Endothelial cell of umbilical vein (primary cell): ENCODE measurements at regions of chr15 and their contacts with region 1.

Region 1: DNA sequence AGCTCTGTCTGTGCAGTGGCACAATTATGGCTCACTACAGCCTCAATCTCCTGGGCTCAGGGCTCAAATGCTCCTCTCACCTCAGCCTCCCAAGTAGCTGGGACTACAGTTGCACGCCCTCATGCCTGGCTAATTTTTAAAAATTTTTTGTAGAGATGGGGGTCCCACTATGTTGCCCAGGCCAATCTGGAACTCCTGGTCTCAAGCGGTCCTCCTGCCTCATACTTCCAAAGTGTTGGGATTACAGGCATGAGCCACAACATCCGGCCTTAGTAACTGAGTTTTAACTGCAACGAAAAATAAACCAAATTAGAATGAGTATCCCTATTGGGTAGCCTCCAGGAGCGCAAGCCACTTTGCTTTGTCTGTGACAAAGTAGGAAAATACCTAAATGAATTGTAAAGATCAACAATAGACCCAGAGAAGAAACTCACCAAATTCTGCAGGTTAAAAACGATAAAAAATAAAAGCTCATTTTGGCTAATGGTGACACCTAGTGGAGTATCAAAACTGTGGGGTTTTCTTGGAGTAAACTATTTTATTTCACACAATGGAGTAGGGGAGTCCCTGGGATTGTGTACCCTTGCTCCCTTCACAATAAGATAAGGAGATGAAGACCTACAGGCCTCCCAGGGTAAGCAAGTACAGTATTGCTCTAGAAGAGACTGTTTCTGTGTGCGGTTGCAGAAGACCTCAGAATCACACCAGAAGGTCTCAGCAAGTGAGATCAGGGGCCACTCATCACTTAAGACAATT is 21.0 kb upstream of the CA12 start:
- DNase-seq: peak; percentile 67
- H3K4me3 ChIP-seq: no peak overlapping the region
- H3K27ac ChIP-seq: no peak overlapping the region
- H3K4me1 ChIP-seq: peaks cover 17% of the 10 kb centered on the region
- H3K27me3 ChIP-seq: no peaks in the 10 kb centered on the region
- CTCF ChIP-seq: peak; percentile 43 to 48
- POLR2A ChIP-seq: no peak

Region 2: DNA sequence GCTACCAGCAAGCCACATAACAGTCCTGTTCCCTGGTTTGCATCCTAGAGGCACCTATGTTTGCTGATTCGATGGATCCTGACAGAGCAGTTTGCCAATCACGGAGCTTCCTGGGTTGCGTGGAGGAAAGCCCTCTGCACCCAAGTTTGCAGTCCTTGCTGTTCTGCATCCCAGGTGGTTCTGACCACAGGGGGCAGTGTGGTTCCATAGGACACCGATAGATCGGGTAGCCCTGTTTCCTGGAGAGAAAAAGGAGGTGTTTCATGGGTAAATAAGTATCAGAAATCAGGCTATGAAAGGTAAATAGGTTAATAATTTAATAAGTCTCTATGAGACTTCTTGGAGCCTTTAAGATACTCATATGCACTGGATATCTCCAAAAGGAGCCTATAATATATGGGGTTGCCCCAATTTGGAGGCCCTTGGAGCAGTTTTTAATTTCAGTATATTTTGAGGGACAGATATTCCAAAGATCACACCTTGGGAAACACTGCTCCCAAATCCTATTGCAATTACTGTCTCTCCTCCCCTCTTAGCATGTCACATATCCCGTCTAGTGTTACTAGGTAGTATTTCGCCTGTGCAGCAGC is 554.7 kb before region 1 on chr15:
- CTCF ChIA-PET with region 1: interaction called, 6 read pairs
- POLR2A ChIA-PET with region 1: no interaction called
- dilution Hi-C with region 1: no loop called
- intact Hi-C with region 1: loop called (anchors 5 kb)
- DNase-seq: peak; percentile 65
- H3K4me3 ChIP-seq: no peak overlapping the region
- H3K27ac ChIP-seq: peak overlapping the region; percentile 44
- H3K4me1 ChIP-seq: peaks cover 39% of the 10 kb centered on the region
- H3K27me3 ChIP-seq: no peaks in the 10 kb centered on the region
- CTCF ChIP-seq: peak; percentile 57 to 73
- POLR2A ChIP-seq: no peak

Region 3: GRCh38 chr15:63122002-63122893 is 280.4 kb before region 1 on chr15:
- CTCF ChIA-PET with region 1: no interaction called
- POLR2A ChIA-PET with region 1: no interaction called
- dilution Hi-C with region 1: no loop called
- intact Hi-C with region 1: loop called (anchors 1 kb)
- DNase-seq: peak; percentile 86
- H3K4me3 ChIP-seq: peak overlapping the region; percentile 88 to 99 (median 88)
- H3K27ac ChIP-seq: peak overlapping the region; percentile 61
- H3K4me1 ChIP-seq: peaks cover 4% of the 10 kb centered on the region
- H3K27me3 ChIP-seq: no peaks in the 10 kb centered on the region
- CTCF ChIP-seq: no peak
- POLR2A ChIP-seq: peak; percentile 24

Region 4: DNA sequence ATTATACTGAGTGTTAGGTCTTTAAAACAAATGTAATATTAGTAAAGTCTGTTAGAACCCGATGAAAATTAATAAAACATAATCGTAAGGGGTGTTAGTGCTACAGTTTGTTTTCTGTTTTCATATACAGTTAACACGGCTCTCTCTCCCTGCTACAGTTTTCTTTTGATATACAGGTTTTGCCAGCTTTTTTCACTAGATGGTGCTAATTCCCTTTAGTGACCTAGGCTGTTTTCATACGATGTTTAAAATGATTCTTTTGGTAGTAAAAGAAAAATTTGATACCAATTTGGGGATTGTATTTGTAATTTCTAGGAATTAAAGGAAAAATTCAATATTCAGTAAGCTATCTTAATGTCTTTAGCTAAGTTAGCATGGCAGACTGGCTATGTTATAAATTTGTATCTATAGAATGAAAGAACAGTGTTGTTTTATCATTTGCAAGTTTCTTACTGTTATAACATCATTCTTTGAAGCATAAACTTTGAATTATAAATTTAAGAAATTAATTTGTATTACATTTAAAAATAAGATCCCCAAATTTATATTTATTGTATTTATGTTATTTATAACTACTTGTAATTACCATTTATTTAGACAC is 113.8 kb before region 1 on chr15:
- CTCF ChIA-PET with region 1: interaction called, 166 read pairs
- POLR2A ChIA-PET with region 1: interaction called, 4 read pairs
- dilution Hi-C with region 1: no loop called
- intact Hi-C with region 1: loop called (anchors 1 kb)
- DNase-seq: peak; percentile 80
- H3K4me3 ChIP-seq: no peak overlapping the region
- H3K27ac ChIP-seq: no peak overlapping the region
- H3K4me1 ChIP-seq: peaks cover 46% of the 10 kb centered on the region
- H3K27me3 ChIP-seq: no peaks in the 10 kb centered on the region
- CTCF ChIP-seq: peak; percentile 34 to 41
- POLR2A ChIP-seq: no peak

Region 5: DNA sequence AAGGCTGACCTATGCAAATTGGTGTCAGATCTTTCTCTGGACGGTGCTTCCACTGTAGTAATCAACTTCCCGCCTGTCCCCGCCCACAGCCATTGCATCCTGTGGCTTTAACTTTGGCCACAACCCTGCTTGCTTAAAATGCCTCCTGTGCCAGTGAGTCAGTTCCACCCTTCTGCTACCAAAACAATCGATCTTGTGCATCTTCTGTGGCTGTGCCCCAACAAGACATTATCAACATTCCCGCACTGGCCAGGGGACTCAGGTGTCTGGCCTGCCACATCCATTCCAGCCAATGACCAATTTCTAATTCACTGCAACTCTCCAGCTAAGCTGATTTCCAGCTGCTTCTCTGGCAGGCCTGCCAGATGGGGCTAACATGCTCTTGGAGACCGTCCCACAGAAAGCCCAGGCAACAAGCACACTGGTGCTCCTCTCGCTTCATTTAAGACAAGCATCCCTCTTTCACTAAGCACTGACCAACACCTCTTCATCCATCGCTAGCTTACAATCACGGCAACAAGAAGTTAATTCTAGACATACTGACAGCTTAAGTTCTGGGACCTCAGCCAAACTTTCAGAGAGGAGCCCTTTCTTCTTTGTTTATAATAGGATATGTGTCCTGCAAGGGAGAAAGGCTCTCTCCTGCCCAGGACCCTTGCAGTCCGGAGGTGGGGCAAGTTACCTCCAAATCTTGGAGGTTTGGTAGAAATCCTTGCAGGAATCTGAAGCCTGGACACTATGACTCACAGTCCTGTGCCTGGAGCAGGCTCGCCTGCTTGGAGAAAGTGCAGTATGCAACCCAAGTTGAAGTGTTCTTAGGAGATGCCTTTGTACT is 27.8 kb before region 1 on chr15:
- CTCF ChIA-PET with region 1: interaction called, 12 read pairs
- POLR2A ChIA-PET with region 1: no interaction called
- dilution Hi-C with region 1: no loop called
- intact Hi-C with region 1: no loop called
- DNase-seq: peak; percentile 84
- H3K4me3 ChIP-seq: no peak overlapping the region
- H3K27ac ChIP-seq: peak overlapping the region; percentile 27
- H3K4me1 ChIP-seq: peaks cover 29% of the 10 kb centered on the region
- H3K27me3 ChIP-seq: no peaks in the 10 kb centered on the region
- CTCF ChIP-seq: no peak
- POLR2A ChIP-seq: no peak

Region 6: DNA sequence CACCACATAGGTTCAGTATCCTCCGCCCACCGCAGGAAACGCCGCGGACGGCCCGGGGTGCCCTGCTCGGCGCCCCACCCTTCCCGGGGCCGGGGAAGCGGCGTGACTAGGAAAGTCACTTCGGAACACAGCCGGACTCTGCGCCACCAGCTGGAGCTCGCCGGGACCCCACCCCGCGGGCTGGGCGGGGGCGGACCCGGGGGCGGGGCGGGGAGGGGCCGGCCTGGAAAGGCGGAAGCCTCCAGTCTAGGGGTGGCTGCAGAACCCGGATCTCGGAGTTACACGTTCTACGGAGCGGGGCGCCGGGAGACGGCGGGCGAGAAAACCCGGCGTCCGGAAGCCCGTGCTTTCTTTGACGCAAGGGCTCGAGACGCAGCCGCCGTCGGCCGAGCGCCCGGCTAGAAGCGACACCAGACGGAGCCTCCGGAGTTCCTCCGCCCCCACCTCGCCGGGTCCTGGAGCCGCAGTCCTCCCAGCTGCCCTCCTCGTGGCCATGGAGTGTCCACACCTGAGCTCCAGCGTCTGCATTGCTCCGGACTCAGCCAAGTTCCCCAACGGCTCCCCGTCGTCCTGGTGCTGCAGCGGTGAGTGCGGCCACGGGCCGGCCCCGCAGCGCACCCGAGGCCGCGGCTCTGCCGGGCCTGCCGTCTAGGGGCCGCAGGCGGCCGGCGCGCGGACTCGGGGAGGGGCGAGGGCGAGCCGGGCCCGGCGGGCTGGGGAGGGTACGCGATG is 101.7 kb after region 1 on chr15 and contains the start of gene USP3:
- CTCF ChIA-PET with region 1: interaction called, 5 read pairs
- POLR2A ChIA-PET with region 1: no interaction called
- dilution Hi-C with region 1: no loop called
- intact Hi-C with region 1: loop called (anchors 5 kb)
- DNase-seq: peak; percentile 96
- H3K4me3 ChIP-seq: peak within 1 kb of the TSS; percentile 55 to 87 (median 85)
- H3K27ac ChIP-seq: peak within 1 kb of the TSS; percentile 92
- H3K4me1 ChIP-seq: peaks cover 61% of the 10 kb centered on the region
- H3K27me3 ChIP-seq: no peaks in the 10 kb centered on the region
- CTCF ChIP-seq: peak in 1 of 2 donors; percentile 32
- POLR2A ChIP-seq: peak; percentile 80
- total RNA-seq, gene USP3: 52.4 and 57.2 TPM in 2 replicates

Region 7: GRCh38 chr15:63805993-63806980 is 403.6 kb after region 1 on chr15:
- CTCF ChIA-PET with region 1: no interaction called
- POLR2A ChIA-PET with region 1: no interaction called
- dilution Hi-C with region 1: no loop called
- intact Hi-C with region 1: no loop called
- DNase-seq: no peak
- H3K4me3 ChIP-seq: no peak overlapping the region
- H3K27ac ChIP-seq: no peak overlapping the region
- H3K4me1 ChIP-seq: no peaks in the 10 kb centered on the region
- H3K27me3 ChIP-seq: no peaks in the 10 kb centered on the region
- CTCF ChIP-seq: no peak
- POLR2A ChIP-seq: no peak